ENCODE measurements at regions of chr18 and their contacts with region 1.

Region 1: GRCh38 chr18:25351777-25352628 is at the start of gene ZNF521:
- H3K4me3 Mint-ChIP-seq: peak within 1 kb of the TSS; percentile 91
- H3K27ac Mint-ChIP-seq: no peak within 1 kb of the TSS
- H3K4me1 Mint-ChIP-seq: peaks cover 14% of the 10 kb centered on the region
- H3K27me3 Mint-ChIP-seq: peaks cover 60% of the 10 kb centered on the region

Region 2: GRCh38 chr18:25230658-25231326 is 121.2 kb before region 1 on chr18:
- intact Hi-C with region 1: loop called (anchors 10 kb)
- H3K4me3 Mint-ChIP-seq: no peak overlapping the region
- H3K27ac Mint-ChIP-seq: peak overlapping the region; percentile 45
- H3K4me1 Mint-ChIP-seq: peaks cover 22% of the 10 kb centered on the region
- H3K27me3 Mint-ChIP-seq: no peaks in the 10 kb centered on the region

Region 3: GRCh38 chr18:25503567-25504081 is 151.6 kb after region 1 on chr18:
- intact Hi-C with region 1: loop called (anchors 10 kb)
- H3K4me3 Mint-ChIP-seq: peak overlapping the region; percentile 20
- H3K27ac Mint-ChIP-seq: no peak overlapping the region
- H3K4me1 Mint-ChIP-seq: peaks cover 8% of the 10 kb centered on the region
- H3K27me3 Mint-ChIP-seq: peaks cover 2% of the 10 kb centered on the region

Measured in dendritic cell treated with granulocyte-macrophage colony-stimulating factor and Interleukin-4, amounts not matched to agents 40 ng/mL and 50 ng/mL, for 4 days (primary cell).